ENCODE measurements at regions of chr2 and their contacts with region 1.

Region 1: GRCh38 chr2:20635675-20636584 is 15.0 kb downstream of the HS1BP3 start:
- DNase-seq: peak; percentile 88 to 93 (median 89)
- ATAC-seq: peak; percentile 76 to 86 (median 85)
- H3K4me3 ChIP-seq: peak overlapping the region in 1 of 12 donors; percentile 10
- H3K27ac ChIP-seq: peak overlapping the region; percentile 32 to 90 (median 77)
- H3K4me1 ChIP-seq: peaks cover 5 to 66% (median 41%) of the 10 kb centered on the region in 12 donors
- H3K27me3 ChIP-seq: no peaks in the 10 kb centered on the region
- CTCF ChIP-seq: peak; percentile 76 to 99 (median 96)
- POLR2A ChIP-seq: peak in 1 of 2 donors; percentile 21

Region 2: DNA sequence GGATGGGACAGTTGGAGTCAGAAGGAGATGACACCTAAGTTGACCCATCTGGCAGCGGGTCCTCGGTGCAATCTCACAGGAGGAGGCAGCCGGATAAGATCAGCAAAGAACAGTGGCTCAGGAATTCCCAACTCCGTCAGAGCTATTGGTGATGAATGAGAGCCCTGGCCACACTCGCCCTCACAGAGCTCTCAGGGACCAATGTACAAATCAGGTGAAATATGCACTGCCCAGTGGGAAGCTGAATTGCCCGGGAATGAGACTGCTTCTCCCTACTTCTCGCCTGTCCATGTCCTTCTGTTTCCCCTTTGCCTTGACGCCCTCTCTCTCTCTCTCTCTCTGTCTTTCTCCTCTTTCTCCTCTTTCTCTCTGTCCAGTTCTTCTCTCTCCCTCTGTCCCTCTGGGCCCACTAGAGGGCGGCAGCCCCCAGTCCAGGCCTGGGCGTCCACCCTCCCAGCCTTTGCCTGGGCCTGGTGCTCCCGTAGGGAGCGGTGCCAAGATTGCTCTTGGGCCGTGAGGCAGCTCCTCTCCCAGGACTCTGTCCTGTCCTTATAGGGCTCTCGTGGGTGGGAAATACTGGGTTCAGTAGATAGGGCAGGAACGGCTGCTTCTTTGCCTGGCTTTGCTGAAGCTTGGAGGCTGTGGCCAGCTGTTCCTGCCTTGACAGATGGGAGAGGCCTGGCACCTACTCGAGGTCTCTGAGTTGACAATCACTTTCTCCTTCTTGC is 257.0 kb before region 1 on chr2:
- intact Hi-C with region 1: loop called in 2 of 10 experiments (anchors 1 to 5 kb)
- DNase-seq: peak; percentile 87 to 93 (median 91)
- ATAC-seq: peak; percentile 94 to 98 (median 97)
- H3K4me3 ChIP-seq: no peak overlapping the region
- H3K27ac ChIP-seq: peak overlapping the region in 10 of 12 donors; percentile 21 to 78 (median 48)
- H3K4me1 ChIP-seq: peaks cover 0 to 25% (median 13%) of the 10 kb centered on the region in 12 donors
- H3K27me3 ChIP-seq: no peaks in the 10 kb centered on the region
- CTCF ChIP-seq: peak; percentile 62 to 92 (median 82)
- POLR2A ChIP-seq: no peak

Region 3: DNA sequence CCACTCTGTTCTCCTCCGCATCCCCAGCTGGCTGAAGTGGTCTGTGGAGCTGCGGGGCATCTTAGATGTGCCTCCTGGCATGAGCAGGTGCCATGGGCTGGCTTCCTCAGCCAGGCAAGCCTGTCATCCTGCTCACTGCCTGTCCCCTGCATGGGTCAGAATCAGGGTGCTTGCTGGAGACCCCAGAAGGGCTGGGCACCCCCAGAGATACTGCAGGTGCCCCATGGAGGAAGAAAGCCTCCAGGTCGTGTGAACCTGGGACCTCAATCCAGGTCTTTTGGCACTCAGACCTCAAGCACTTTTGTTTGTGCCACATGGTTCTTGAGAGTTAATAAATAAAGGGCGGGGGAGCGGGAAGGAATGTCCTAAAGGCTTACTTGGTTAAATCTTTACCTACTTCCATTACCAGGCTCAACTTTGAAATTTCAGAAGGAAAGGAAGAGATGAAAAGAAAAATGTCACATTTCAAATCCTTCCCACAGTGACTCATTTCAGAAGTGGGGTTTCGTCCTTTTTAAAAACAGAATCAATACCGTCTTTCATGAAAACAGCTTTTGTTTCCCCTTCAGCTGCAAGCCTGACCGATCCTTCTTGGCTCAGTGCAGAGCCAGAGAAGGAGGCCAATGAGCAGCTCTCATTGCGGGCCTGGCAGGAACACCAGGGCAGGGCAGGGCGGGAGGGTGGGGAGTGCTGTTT is 119.1 kb before region 1 on chr2:
- intact Hi-C with region 1: loop called in 1 of 10 experiments (anchors 10 kb)
- DNase-seq: peak in 1 of 5 donors; percentile 42
- ATAC-seq: peak; percentile 32 to 66 (median 47)
- H3K4me3 ChIP-seq: no peak overlapping the region
- H3K27ac ChIP-seq: peak overlapping the region in 10 of 12 donors; percentile 1 to 60 (median 46)
- H3K4me1 ChIP-seq: peaks cover 0 to 11% (median 0%) of the 10 kb centered on the region in 12 donors
- H3K27me3 ChIP-seq: no peaks in the 10 kb centered on the region
- CTCF ChIP-seq: no peak
- POLR2A ChIP-seq: no peak

Region 4: DNA sequence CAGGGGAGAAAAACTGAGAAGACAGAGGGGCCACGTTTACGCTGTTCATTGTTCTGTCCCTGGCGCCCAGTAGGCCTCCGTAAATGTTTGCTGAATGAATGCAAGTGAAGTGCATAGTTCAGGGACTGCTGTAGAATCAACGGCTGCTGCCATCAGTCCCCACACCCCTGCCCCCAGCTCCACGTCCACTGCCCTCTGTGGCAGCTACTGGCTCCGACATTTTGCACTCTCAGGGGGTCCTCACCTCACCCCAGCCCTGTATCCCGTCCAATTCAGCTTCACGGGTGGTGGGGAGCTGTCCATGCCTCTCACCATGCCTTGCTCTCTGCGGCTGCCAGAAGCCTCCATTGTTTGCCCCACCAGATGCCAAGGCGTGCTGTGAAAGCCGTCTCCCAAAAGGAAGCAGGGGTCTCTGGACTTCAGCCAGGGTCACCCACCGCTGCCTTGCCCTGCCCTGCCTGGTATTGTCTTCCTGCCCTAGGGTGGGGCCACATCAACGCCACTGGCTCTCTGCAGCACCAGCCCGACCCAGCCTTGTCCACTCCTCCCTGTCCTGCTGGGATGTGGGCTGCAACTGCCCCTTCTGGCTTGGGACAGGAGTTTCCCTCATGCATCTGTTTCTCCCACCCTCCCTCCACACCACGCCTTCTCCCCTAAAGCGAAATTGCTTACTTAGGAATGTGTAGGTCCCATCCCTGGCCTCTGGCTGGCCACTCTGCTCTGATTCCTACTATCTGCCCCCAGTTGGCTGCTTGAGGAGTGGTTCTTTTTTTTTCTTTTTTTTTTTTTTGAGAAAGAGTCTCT is 103.1 kb before region 1 on chr2:
- intact Hi-C with region 1: loop called in 2 of 10 experiments (anchors 5 kb)
- DNase-seq: peak in 1 of 5 donors; percentile 49
- ATAC-seq: no peak
- H3K4me3 ChIP-seq: no peak overlapping the region
- H3K27ac ChIP-seq: peak overlapping the region in 6 of 12 donors; percentile 7 to 61 (median 35)
- H3K4me1 ChIP-seq: peaks cover 0 to 63% (median 25%) of the 10 kb centered on the region in 12 donors
- H3K27me3 ChIP-seq: no peaks in the 10 kb centered on the region
- CTCF ChIP-seq: no peak
- POLR2A ChIP-seq: no peak

Region 5: DNA sequence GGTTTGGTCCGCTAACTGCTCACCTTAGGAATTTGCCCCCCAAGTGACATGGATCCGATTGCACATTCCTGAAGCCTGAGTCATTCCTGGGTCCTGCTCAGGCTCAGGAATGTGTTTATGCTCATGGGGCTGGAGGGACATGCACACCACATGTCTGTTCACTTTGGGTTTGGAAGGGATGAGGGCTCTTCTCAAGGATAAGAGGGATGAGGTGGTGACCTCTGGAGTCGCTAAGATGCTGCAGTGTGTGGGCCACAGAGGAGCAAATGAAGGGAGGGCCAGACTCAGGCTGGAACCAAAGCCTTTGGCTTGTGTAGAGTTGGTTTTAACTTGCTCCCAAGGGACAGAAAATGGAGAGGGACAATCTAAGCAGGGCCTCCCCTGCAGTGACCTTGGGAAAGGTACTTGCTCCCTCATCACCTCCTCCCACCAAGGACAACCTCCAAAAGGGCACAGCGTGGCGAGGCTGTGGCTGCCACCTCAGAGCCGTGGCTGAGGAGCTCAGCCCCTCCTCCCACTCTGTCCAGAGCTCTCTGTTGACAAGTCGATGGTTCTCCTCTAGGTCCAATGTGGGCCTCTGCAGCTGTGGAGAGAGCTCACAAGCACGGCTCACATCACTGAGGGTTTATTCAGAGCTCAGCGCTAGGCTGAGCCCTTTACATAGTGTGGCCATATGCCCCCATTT is 51.2 kb before region 1 on chr2:
- intact Hi-C with region 1: loop called in 1 of 10 experiments (anchors 5 kb)
- DNase-seq: peak in 2 of 5 donors; percentile 43 to 58
- ATAC-seq: peak; percentile 51 to 81 (median 66)
- H3K4me3 ChIP-seq: no peak overlapping the region
- H3K27ac ChIP-seq: peak overlapping the region in 10 of 12 donors; percentile 13 to 55 (median 42)
- H3K4me1 ChIP-seq: peaks cover 9 to 74% (median 42%) of the 10 kb centered on the region in 12 donors
- H3K27me3 ChIP-seq: no peaks in the 10 kb centered on the region
- CTCF ChIP-seq: no peak
- POLR2A ChIP-seq: no peak

Region 6: GRCh38 chr2:20595431-20596192 is 40.3 kb before region 1 on chr2:
- intact Hi-C with region 1: loop called in 6 of 10 experiments (anchors 1 to 5 kb)
- DNase-seq: peak in 3 of 5 donors; percentile 35 to 56 (median 36)
- ATAC-seq: peak in 1 of 4 donors; percentile 4
- H3K4me3 ChIP-seq: no peak overlapping the region
- H3K27ac ChIP-seq: peak overlapping the region; percentile 66 to 92 (median 79)
- H3K4me1 ChIP-seq: peaks cover 13 to 90% (median 63%) of the 10 kb centered on the region in 12 donors
- H3K27me3 ChIP-seq: no peaks in the 10 kb centered on the region
- CTCF ChIP-seq: no peak
- POLR2A ChIP-seq: peak in 1 of 2 donors; percentile 16

Region 7: GRCh38 chr2:20600756-20601325 is 35.1 kb before region 1 on chr2:
- intact Hi-C with region 1: loop called in 6 of 10 experiments (anchors 1 to 5 kb)
- DNase-seq: no peak
- ATAC-seq: no peak
- H3K4me3 ChIP-seq: no peak overlapping the region
- H3K27ac ChIP-seq: peak overlapping the region in 10 of 12 donors; percentile 23 to 92 (median 80)
- H3K4me1 ChIP-seq: peaks cover 13 to 73% (median 55%) of the 10 kb centered on the region in 12 donors
- H3K27me3 ChIP-seq: no peaks in the 10 kb centered on the region
- CTCF ChIP-seq: peak; percentile 22 to 64 (median 48)
- POLR2A ChIP-seq: no peak